ENCODE measurements at regions of chr10 and their contacts with region 1.

Region 1: DNA sequence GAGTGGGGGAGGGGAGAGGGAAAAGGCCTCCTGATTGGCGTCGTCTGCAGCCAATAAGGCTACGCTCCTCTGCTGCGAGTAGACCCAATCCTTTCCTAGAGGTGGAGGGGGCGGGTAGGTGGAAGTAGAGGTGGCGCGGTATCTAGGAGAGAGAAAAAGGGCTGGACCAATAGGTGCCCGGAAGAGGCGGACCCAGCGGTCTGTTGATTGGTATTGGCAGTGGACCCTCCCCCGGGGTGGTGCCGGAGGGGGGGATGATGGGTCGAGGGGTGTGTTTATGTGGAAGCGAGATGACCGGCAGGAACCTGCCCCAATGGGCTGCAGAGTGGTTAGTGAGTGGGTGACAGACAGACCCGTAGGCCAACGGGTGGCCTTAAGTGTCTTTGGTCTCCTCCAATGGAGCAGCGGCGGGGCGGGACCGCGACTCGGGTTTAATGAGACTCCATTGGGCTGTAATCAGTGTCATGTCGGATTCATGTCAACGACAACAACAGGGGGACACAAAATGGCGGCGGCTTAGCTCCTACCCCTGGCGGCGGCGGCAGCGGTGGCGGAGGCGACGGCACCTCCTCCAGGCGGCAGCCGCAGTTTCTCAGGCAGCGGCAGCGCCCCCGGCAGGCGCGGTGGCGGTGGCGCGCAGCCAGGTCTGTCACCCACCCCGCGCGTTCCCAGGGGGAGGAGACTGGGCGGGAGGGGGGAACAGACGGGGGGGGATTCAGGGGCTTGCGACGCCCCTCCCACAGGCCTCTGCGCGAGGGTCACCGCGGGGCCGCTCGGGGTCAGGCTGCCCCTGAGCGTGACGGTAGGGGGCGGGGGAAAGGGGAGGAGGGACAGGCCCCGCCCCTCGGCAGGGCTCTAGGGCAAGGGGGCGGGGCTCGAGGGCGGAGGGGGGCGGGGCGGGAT is at the start of gene KAT6B:
- DNase-seq: peak; percentile 100
- H3K4me3 Mint-ChIP-seq: peak within 1 kb of the TSS; percentile 86
- H3K27ac Mint-ChIP-seq: peak within 1 kb of the TSS; percentile 95
- H3K4me1 Mint-ChIP-seq: peaks cover 53% of the 10 kb centered on the region
- H3K27me3 Mint-ChIP-seq: no peaks in the 10 kb centered on the region
- total RNA-seq, gene KAT6B: 24.2 and 26.6 TPM in 2 replicates

Region 2: DNA sequence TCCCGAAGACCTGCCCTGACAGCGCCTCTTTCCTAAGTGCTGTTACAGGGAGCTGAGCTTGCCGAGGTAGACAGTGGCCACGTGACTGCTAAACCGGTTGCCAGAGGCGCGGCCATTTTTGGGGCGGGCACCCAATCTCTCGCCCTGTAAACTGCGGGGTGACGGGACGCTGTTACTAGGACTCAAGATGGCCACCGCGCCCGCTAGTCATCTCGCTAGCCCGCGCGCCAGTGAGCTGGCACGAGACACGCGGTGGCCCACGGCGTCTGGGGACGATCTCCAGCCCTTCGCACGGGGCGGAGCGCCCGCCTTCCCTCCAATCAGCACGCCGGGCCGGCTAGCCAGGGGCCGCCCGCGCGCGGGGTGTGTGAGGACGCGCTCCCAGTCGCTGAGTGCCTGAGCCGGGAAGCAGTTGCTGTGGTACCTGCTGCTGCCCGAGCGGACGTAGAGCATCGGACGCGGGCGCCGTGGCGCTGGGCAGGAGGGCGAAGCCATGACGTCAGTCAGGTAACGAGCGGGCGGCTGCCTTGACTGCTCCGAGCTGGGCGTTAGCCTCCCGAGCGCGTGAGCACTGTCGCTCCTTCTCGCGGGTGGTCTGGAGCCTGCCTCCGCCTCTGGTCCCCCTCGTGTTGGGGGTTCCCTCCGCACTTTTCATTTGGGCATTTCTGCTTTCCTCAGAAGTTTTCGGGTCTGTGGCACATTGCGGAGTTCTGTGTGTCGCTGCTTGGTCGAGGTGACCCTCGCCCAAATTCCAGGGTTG is 649.8 kb before region 1 on chr10:
- intact Hi-C with region 1: loop called (anchors 2 kb)
- DNase-seq: peak; percentile 96
- H3K4me3 Mint-ChIP-seq: peak overlapping the region; percentile 92
- H3K27ac Mint-ChIP-seq: peak overlapping the region; percentile 97
- H3K4me1 Mint-ChIP-seq: peaks cover 43% of the 10 kb centered on the region
- H3K27me3 Mint-ChIP-seq: no peaks in the 10 kb centered on the region

Region 3: DNA sequence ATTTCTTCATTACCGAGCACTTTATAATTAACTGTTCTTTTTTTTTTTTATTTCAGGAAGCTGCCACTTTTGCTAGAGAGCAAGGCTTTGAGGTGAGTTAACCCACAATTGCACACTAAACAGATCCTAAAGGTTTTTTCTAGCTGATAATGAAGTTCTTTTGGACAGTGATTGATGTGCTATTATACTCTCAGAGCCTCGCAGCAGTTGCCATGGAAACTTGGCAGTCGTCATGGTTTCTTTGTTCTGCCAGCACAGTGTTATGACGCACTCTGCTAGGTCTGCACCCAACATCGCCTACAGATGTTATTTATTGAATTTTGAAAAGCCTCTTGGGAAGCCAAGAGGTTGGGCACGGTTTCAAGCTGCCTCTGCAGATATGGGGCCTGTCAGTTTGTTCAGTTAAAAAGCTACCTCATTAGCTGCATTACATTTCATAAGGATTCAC is 237.1 kb before region 1 on chr10:
- intact Hi-C with region 1: loop called (anchors 1 kb)
- DNase-seq: peak; percentile 77
- H3K4me3 Mint-ChIP-seq: no peak overlapping the region
- H3K27ac Mint-ChIP-seq: peak overlapping the region; percentile 71
- H3K4me1 Mint-ChIP-seq: peaks cover 68% of the 10 kb centered on the region
- H3K27me3 Mint-ChIP-seq: no peaks in the 10 kb centered on the region

Region 4: GRCh38 chr10:74855027-74855426 is 28.6 kb after region 1 on chr10:
- intact Hi-C with region 1: loop called (anchors 2 kb)
- DNase-seq: no peak
- H3K4me3 Mint-ChIP-seq: peak overlapping the region; percentile 3
- H3K27ac Mint-ChIP-seq: peak overlapping the region; percentile 65
- H3K4me1 Mint-ChIP-seq: peaks cover 25% of the 10 kb centered on the region
- H3K27me3 Mint-ChIP-seq: no peaks in the 10 kb centered on the region

Region 5: DNA sequence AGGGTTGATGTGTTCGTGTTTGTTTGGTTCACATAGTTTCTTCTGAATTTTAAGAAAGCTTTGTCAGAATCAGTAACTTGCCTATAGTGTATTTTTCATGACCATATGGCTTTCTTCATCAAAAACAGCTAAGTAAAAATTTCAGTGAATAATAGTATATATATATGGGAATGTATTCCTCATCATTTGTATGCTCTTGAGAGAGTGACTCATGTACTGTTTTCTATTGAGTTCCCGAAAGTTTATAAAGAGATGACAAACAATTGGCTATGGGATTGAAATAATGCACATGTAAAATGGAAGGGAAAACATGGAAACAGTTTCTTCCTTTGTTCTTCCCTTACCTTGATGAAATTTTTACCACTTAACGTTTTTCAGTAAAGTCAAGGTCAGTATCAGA is 56.4 kb after region 1 on chr10:
- intact Hi-C with region 1: no loop called
- DNase-seq: no peak
- H3K4me3 Mint-ChIP-seq: no peak overlapping the region
- H3K27ac Mint-ChIP-seq: no peak overlapping the region
- H3K4me1 Mint-ChIP-seq: peaks cover 5% of the 10 kb centered on the region
- H3K27me3 Mint-ChIP-seq: no peaks in the 10 kb centered on the region

Region 6: GRCh38 chr10:74977913-74978847 is 151.8 kb after region 1 on chr10:
- intact Hi-C with region 1: loop called (anchors 2 kb)
- DNase-seq: peak; percentile 60
- H3K4me3 Mint-ChIP-seq: peak overlapping the region; percentile 37
- H3K27ac Mint-ChIP-seq: peak overlapping the region; percentile 74
- H3K4me1 Mint-ChIP-seq: peaks cover 49% of the 10 kb centered on the region
- H3K27me3 Mint-ChIP-seq: no peaks in the 10 kb centered on the region

Region 7: DNA sequence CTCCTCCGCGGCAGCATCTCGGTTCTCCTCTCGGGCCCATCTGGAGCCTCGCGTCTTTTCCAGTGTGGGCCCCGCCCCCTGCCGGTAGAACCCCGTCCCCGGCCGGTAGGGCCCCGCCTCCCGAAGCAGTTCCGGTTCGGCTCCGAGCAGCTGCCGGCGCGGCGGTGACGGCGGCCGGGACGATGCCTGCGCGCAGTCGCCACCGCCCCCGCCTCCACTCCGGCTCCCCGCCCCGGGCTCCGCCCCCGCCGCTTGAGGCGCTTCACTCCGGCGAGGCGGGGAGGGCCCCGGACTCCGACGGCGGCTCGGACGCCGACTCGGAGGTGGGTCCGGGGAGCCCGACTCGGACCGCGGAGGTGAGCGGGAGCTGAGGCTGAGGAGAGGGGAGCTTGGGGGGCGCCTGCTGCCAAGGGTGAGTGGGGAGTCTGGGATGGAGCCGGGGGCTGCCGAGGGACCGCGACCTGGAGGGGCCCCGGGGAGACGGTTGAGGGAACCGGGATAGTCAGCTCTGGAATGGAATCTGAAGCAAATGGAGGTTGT is 285.0 kb after region 1 on chr10 and contains the start of gene SAMD8:
- intact Hi-C with region 1: loop called (anchors 2 kb)
- DNase-seq: peak; percentile 97
- H3K4me3 Mint-ChIP-seq: peak within 1 kb of the TSS; percentile 89
- H3K27ac Mint-ChIP-seq: peak within 1 kb of the TSS; percentile 90
- H3K4me1 Mint-ChIP-seq: peaks cover 43% of the 10 kb centered on the region
- H3K27me3 Mint-ChIP-seq: no peaks in the 10 kb centered on the region
- total RNA-seq, gene SAMD8: 14.9 and 15.6 TPM in 2 replicates

Region 8: GRCh38 chr10:75235375-75236177 is 409.2 kb after region 1 on chr10 and contains the start of gene COMTD1:
- intact Hi-C with region 1: loop called (anchors 5 kb)
- DNase-seq: peak; percentile 92
- H3K4me3 Mint-ChIP-seq: peak within 1 kb of the TSS; percentile 81
- H3K27ac Mint-ChIP-seq: peak within 1 kb of the TSS; percentile 70
- H3K4me1 Mint-ChIP-seq: peaks cover 16% of the 10 kb centered on the region
- H3K27me3 Mint-ChIP-seq: no peaks in the 10 kb centered on the region
- total RNA-seq, gene COMTD1: 38.5 and 38.7 TPM in 2 replicates